Endothelial cell of umbilical vein (primary cell): ENCODE measurements at regions of chr19 and their contacts with region 1.

Region 1: GRCh38 chr19:1551068-1552040 is 16.8 kb downstream of the MEX3D start:
- DNase-seq: no peak
- H3K4me3 ChIP-seq: no peak overlapping the region
- H3K27ac ChIP-seq: no peak overlapping the region
- H3K4me1 ChIP-seq: no peaks in the 10 kb centered on the region
- H3K27me3 ChIP-seq: no peaks in the 10 kb centered on the region
- CTCF ChIP-seq: no peak
- POLR2A ChIP-seq: no peak

Region 2: DNA sequence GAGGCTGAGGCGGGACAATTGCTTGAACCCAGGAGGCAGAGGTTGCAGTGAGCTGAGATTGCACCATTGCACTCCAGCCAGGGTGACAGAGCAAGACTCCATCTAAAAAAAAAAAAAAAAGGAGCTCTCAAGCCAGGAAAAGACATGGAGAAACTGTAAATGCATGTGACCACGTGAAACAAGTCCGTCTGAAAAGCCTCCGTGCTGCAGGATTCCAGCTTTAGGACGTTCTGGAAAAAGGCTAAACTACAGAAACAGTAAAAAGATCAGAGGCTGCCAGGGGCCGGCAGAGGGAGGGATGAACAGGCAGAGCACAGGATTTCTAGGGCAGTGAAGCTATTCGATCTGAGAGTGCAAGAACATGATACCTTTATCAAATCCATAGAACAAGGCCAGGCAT is 208.3 kb before region 1 on chr19:
- CTCF ChIA-PET with region 1: no interaction called
- POLR2A ChIA-PET with region 1: no interaction called
- dilution Hi-C with region 1: no loop called
- intact Hi-C with region 1: no loop called
- DNase-seq: no peak
- H3K4me3 ChIP-seq: no peak overlapping the region
- H3K27ac ChIP-seq: no peak overlapping the region
- H3K4me1 ChIP-seq: no peaks in the 10 kb centered on the region
- H3K27me3 ChIP-seq: no peaks in the 10 kb centered on the region
- CTCF ChIP-seq: no peak
- POLR2A ChIP-seq: no peak

Region 3: GRCh38 chr19:1429750-1430149 is 121.6 kb before region 1 on chr19:
- CTCF ChIA-PET with region 1: no interaction called
- POLR2A ChIA-PET with region 1: no interaction called
- dilution Hi-C with region 1: no loop called
- intact Hi-C with region 1: no loop called
- DNase-seq: no peak
- H3K4me3 ChIP-seq: no peak overlapping the region
- H3K27ac ChIP-seq: no peak overlapping the region
- H3K4me1 ChIP-seq: no peaks in the 10 kb centered on the region
- H3K27me3 ChIP-seq: no peaks in the 10 kb centered on the region
- CTCF ChIP-seq: no peak
- POLR2A ChIP-seq: no peak

Region 4: DNA sequence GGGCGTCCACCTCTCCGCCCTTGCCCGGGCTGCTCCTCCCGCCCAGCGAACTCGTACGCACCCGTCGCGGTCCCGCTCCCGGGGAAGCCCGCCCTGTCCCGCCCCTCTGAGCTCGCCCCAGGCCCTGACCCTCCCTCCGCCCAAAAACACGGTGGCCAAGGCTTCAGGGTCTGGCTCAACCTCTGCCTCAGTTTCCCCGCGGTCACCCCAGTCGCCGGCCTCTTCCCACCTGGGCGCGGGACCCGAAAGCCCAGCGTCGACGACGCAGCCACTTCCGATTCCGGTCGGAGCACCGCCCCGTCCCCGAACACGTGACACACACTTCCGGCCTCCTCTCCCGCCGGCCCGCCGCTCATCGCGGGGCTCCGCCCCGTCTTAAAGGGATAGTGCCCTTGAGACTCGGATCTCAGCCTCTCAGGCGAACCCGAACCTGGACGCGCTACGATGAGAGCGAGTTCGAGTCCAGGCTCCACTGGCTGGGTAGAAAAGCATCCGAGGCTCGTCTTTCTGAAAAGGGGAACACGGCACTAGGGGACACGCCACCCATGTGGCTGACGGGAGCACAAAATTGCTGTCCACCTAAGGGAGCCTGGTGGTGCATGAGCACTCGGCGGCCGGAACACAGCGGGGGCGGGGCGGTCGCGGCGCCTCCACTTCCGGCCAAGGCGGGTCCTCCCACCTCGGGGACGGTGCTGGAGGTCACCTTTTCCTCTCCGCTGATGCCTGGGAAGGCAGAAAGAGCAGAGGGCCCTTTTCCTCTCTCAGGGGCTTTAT is 72.2 kb before region 1 on chr19 and contains the start of gene C19orf25:
- CTCF ChIA-PET with region 1: no interaction called
- POLR2A ChIA-PET with region 1: no interaction called
- dilution Hi-C with region 1: no loop called
- intact Hi-C with region 1: no loop called
- DNase-seq: peak; percentile 91
- H3K4me3 ChIP-seq: peak within 1 kb of the TSS; percentile 75 to 88 (median 75)
- H3K27ac ChIP-seq: peak within 1 kb of the TSS; percentile 15
- H3K4me1 ChIP-seq: peaks cover 3% of the 10 kb centered on the region
- H3K27me3 ChIP-seq: no peaks in the 10 kb centered on the region
- CTCF ChIP-seq: no peak
- POLR2A ChIP-seq: peak; percentile 90
- total RNA-seq, gene C19orf25: 28.0 and 29.0 TPM in 2 replicates

Region 5: GRCh38 chr19:1568320-1569019 is 17.1 kb after region 1 on chr19 and contains the start of gene MEX3D:
- CTCF ChIA-PET with region 1: interaction called, 40 read pairs
- POLR2A ChIA-PET with region 1: interaction called, 4 read pairs
- dilution Hi-C with region 1: no loop called
- intact Hi-C with region 1: no loop called
- DNase-seq: peak; percentile 23
- H3K4me3 ChIP-seq: peak within 1 kb of the TSS; percentile 81 to 99 (median 95)
- H3K27ac ChIP-seq: peak within 1 kb of the TSS; percentile 96
- H3K4me1 ChIP-seq: peaks cover 8% of the 10 kb centered on the region
- H3K27me3 ChIP-seq: peaks cover 0 to 6% of the 10 kb centered on the region in 2 experiments
- CTCF ChIP-seq: no peak
- POLR2A ChIP-seq: no peak
- total RNA-seq, gene MEX3D: 96.7 and 98.5 TPM in 2 replicates

Region 6: DNA sequence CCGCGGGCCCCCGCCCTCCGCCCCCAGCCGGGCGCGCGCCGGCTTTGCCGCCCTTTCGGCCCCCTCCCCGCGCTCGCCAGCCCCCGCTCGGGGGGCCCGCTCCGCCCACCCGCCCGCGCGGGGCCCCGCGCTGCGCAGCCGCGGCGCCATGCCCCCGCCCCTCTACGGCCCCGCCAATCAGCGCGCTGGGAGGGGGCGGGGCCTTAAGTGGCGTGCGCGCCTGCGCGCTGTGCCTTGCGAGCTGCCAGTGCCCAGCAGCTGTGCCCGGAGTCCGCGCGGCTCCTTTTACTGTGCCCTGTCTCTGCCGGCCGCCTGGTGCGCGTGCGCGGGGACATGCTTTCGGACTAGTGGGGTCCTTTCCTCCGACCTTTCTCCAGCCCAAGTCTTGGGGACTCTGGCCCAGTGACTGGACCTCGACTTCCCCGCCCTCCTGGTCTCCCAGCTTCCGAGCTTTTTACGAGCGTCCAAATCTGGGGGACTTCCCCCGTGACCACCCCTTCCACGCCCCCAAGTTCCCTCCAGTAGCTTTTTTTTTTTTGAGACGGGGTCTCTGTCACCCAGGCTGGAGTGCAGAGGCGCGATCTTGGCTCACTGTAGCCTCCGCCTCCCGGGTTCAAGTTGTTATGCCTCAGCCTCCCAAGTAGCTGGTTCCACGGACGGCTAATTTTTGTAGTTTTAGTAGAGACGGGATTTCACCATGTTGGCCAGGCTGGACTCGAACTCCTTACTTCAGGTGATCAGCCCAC is 41.6 kb after region 1 on chr19 and contains the start of gene MBD3:
- CTCF ChIA-PET with region 1: interaction called, 26 read pairs
- POLR2A ChIA-PET with region 1: no interaction called
- dilution Hi-C with region 1: no loop called
- intact Hi-C with region 1: no loop called
- DNase-seq: peak; percentile 89
- H3K4me3 ChIP-seq: peak within 1 kb of the TSS; percentile 89 to 99 (median 99)
- H3K27ac ChIP-seq: peak within 1 kb of the TSS; percentile 88
- H3K4me1 ChIP-seq: peaks cover 15% of the 10 kb centered on the region
- H3K27me3 ChIP-seq: no peaks in the 10 kb centered on the region
- CTCF ChIP-seq: no peak
- POLR2A ChIP-seq: peak; percentile 75
- total RNA-seq, gene MBD3: 120 and 121 TPM in 2 replicates

Region 7: GRCh38 chr19:1652471-1653299 is 101.3 kb after region 1 on chr19 and contains the start of gene TCF3:
- CTCF ChIA-PET with region 1: interaction called, 11 read pairs
- POLR2A ChIA-PET with region 1: no interaction called
- dilution Hi-C with region 1: no loop called
- intact Hi-C with region 1: no loop called
- DNase-seq: peak; percentile 99
- H3K4me3 ChIP-seq: peak within 1 kb of the TSS; percentile 45 to 89 (median 62)
- H3K27ac ChIP-seq: peak within 1 kb of the TSS; percentile 98
- H3K4me1 ChIP-seq: peaks cover 2% of the 10 kb centered on the region
- H3K27me3 ChIP-seq: no peaks in the 10 kb centered on the region
- CTCF ChIP-seq: no peak
- POLR2A ChIP-seq: peak; percentile 28
- total RNA-seq, gene TCF3: 193 and 197 TPM in 2 replicates

Region 8: DNA sequence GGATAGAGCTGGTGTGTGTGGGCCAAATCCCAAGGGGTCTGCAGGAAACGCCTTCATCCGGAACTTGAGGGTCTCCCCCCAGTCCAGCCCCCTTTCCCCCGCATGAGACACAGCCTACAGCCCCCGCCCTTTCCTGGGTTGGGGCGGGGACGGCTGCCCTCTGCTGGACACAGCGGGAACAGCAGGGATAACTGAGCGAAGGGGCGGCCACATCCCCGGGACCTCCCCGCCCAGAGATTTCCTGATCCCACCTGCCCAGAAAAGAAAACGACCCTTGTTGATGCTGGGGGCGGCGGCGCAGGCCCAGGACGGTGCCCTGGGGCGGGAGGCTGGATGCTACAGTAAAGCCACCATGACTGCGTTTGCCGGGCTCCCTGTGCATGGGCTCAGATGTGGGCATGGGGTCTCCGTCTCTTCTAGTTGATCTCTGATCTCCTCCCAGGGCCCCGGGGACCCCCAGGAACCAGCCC is 216.1 kb after region 1 on chr19:
- CTCF ChIA-PET with region 1: interaction called, 19 read pairs
- POLR2A ChIA-PET with region 1: no interaction called
- dilution Hi-C with region 1: no loop called
- intact Hi-C with region 1: loop called (anchors 1 kb)
- DNase-seq: peak; percentile 24
- H3K4me3 ChIP-seq: no peak overlapping the region
- H3K27ac ChIP-seq: no peak overlapping the region
- H3K4me1 ChIP-seq: no peaks in the 10 kb centered on the region
- H3K27me3 ChIP-seq: peaks cover 43% of the 10 kb centered on the region in 2 experiments
- CTCF ChIP-seq: peak; percentile 88 to 95
- POLR2A ChIP-seq: no peak

Region 9: GRCh38 chr19:1794424-1795172 is 243.2 kb after region 1 on chr19:
- CTCF ChIA-PET with region 1: interaction called, 38 read pairs
- POLR2A ChIA-PET with region 1: no interaction called
- dilution Hi-C with region 1: no loop called
- intact Hi-C with region 1: no loop called
- DNase-seq: no peak
- H3K4me3 ChIP-seq: no peak overlapping the region
- H3K27ac ChIP-seq: no peak overlapping the region
- H3K4me1 ChIP-seq: no peaks in the 10 kb centered on the region
- H3K27me3 ChIP-seq: no peaks in the 10 kb centered on the region
- CTCF ChIP-seq: no peak
- POLR2A ChIP-seq: no peak